ENCODE measurements at regions of chr2 and their contacts with region 1.

Region 1: GRCh38 chr2:120699292-120699691 is 36.4 kb upstream of the GLI2 start:
- DNase-seq: no peak
- ATAC-seq: no peak
- H3K4me3 ChIP-seq: no peak overlapping the region
- H3K27ac ChIP-seq: no peak overlapping the region
- H3K4me1 ChIP-seq: no peaks in the 10 kb centered on the region
- H3K27me3 ChIP-seq: no peaks in the 10 kb centered on the region

Region 2: DNA sequence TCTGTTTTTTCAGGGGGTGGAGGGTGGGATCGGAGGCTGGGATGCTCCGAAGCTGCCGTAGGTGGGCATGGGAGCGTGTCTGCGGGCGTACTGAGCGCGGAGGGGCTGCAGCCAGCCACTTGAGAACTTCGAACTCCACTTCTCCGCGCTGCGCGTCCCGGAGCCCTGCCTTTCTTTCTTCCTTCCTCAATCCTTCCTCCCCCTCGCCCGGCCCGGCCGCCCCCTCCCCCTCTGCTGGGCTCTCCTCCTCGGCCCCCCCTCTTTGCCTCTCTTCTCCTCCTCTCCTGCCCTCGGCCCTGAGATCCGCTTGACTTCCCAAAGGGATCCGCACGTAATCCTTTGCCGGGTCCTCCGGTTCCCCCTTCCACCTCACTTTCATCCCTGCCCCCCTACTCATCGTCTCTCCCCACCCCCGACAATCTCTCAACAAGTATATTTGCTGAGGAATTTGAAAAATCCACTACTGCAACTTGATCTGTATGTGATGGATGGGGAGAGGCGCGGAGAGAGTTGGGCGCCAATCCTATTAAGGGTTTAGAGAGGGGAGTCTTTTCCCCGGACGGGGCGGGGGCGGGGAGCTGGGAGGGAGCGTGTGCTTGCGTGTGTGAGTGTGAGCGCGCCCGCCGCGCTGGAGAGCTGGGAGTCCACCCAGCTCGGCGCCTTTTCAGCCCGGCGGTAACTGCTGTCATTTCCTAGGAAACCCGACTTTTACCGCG is 37.5 kb after region 1 on chr2:
- intact Hi-C with region 1: no loop called
- DNase-seq: peak; percentile 70 to 87 (median 86)
- ATAC-seq: peak; percentile 71 to 77
- H3K4me3 ChIP-seq: peak overlapping the region; percentile 49
- H3K27ac ChIP-seq: peak overlapping the region; percentile 63
- H3K4me1 ChIP-seq: no peaks in the 10 kb centered on the region
- H3K27me3 ChIP-seq: no peaks in the 10 kb centered on the region

Region 3: GRCh38 chr2:121071034-121071504 is 371.8 kb after region 1 on chr2:
- intact Hi-C with region 1: loop called (anchors 2 to 5 kb)
- DNase-seq: peak; percentile 74 to 93 (median 88)
- ATAC-seq: peak; percentile 66 to 71
- H3K4me3 ChIP-seq: no peak overlapping the region
- H3K27ac ChIP-seq: no peak overlapping the region
- H3K4me1 ChIP-seq: no peaks in the 10 kb centered on the region
- H3K27me3 ChIP-seq: no peaks in the 10 kb centered on the region

Measured in right cardiac atrium (tissue), 5 donors.